RWPE1 (cell line): ENCODE measurements at regions of chr14 and their contacts with region 1.

Region 1: GRCh38 chr14:90871605-90872233 is 55.5 kb upstream of the TTC7B start:
- DNase-seq: peak; percentile 56
- H3K27ac ChIP-seq: peak overlapping the region; percentile 77
- CTCF ChIP-seq: no peak

Region 2: GRCh38 chr14:90858511-90858910 is 13.2 kb before region 1 on chr14:
- CTCF ChIA-PET with region 1: interaction called, 10 read pairs
- POLR2A ChIA-PET with region 1: no interaction called
- DNase-seq: no peak
- H3K27ac ChIP-seq: no peak overlapping the region
- CTCF ChIP-seq: no peak

Region 3: GRCh38 chr14:90905531-90905930 is 33.8 kb after region 1 on chr14:
- CTCF ChIA-PET with region 1: no interaction called
- POLR2A ChIA-PET with region 1: no interaction called
- DNase-seq: no peak
- H3K27ac ChIP-seq: no peak overlapping the region
- CTCF ChIP-seq: no peak

Region 4: GRCh38 chr14:91119556-91120311 is 248.0 kb after region 1 on chr14:
- CTCF ChIA-PET with region 1: no interaction called
- POLR2A ChIA-PET with region 1: no interaction called
- DNase-seq: peak; percentile 11
- H3K27ac ChIP-seq: peak overlapping the region; percentile 81
- CTCF ChIP-seq: no peak